Gastrocnemius medialis (tissue), 4 donors: ENCODE measurements at regions of chr9 and their contacts with region 1.

Region 1: DNA sequence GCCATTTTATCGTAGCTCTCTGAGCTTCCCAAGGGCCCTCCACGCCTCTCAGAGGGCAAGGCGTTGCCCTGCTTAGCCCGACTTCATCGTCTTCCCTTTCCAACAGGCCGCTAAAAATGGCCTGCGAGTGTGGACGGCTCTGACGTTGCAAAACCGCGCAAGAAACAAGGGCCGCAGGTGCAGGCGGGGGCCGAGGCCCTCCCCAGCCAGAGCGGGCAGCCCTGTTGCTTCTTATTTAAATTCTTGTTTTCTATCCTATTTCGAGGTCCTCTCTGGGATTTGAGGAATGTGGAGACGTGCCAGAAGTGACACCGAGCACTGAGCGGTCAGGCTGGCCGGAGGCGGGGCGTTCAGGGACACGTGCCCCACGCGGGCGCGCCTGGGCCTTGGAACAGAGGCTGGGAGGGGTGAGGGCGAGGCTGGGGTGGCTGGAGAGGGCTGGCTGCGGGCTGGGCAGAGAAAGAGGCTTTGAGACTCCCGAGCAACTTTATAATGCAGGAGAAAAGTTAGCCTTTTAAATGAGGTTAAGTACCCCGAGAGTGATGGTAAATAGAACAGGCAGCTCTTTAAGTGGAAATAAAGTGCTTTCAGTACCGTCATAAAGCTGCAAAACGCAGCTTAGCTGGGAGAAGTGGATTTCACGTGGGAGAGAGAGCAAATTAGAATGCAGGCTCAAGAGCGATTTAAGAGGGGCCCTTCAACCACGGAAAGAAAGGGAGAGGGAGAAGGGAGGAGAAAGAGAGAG is 243.6 kb downstream of the AUH start:
- DNase-seq: peak; percentile 84 to 90
- ATAC-seq: peak; percentile 86 to 89
- H3K4me3 ChIP-seq: peak overlapping the region; percentile 41 to 50 (median 42)
- H3K27ac ChIP-seq: peak overlapping the region; percentile 80 to 90 (median 82)
- H3K4me1 ChIP-seq: peaks cover 25 to 32% of the 10 kb centered on the region in 2 donors
- H3K27me3 ChIP-seq: no peaks in the 10 kb centered on the region
- CTCF ChIP-seq: no peak
- POLR2A ChIP-seq: peak; percentile 55 to 70

Region 2: DNA sequence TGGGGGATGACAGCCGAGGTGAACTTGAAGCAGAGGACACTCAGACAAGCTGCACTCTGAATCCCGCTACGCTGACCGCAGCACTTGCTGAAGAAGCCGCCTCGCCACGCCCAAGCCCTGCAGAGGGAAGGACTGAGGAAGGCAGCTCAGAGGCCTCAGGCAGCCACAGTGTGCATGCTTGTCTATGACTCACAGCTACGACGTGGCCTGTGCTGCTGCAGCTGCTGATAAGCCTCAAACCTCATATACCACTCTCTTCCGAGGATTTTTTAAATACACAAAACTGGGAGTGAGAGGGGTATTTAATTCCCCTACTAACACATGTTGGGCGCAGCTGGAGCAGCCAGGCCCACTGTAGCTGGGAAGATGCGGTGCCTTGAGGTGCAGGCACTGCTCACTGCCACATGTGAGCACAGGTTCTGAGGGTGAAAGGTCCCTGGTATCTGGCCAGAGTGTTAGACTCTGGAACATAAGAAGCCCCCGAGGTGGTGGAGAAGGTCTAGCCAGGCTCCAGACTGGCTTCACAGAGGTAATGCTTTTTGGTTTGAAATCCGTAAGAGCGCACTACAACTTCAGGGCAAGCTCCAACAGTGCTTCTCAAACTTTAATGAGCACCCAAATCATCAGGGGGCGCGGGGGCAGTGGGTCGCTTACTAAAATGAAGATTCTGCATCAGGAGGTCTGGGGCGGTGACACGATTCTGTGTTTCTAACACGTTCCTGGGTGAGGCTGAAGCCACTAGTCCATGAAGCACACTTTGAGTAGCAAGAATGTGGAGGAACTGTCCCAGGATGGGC is 46.8 kb after region 1 on chr9:
- in situ Hi-C with region 1: no loop called
- intact Hi-C with region 1: loop called (anchors 5 kb)
- DNase-seq: peak; percentile 38 to 47
- ATAC-seq: no peak
- H3K4me3 ChIP-seq: no peak overlapping the region
- H3K27ac ChIP-seq: no peak overlapping the region
- H3K4me1 ChIP-seq: peaks cover 0 to 6% of the 10 kb centered on the region in 2 donors
- H3K27me3 ChIP-seq: no peaks in the 10 kb centered on the region
- CTCF ChIP-seq: no peak
- POLR2A ChIP-seq: no peak

Region 3: GRCh38 chr9:91285729-91286353 is 167.7 kb after region 1 on chr9:
- in situ Hi-C with region 1: no loop called
- intact Hi-C with region 1: no loop called
- DNase-seq: no peak
- ATAC-seq: peak in 1 of 2 donors; percentile 36
- H3K4me3 ChIP-seq: no peak overlapping the region
- H3K27ac ChIP-seq: peak overlapping the region in 1 of 4 donors; percentile 33
- H3K4me1 ChIP-seq: peaks cover 3 to 17% of the 10 kb centered on the region in 2 donors
- H3K27me3 ChIP-seq: no peaks in the 10 kb centered on the region
- CTCF ChIP-seq: no peak
- POLR2A ChIP-seq: no peak